CD8-positive, alpha-beta T cell (primary cell): ENCODE measurements at regions of chr17 and their contacts with region 1.

Region 1: DNA sequence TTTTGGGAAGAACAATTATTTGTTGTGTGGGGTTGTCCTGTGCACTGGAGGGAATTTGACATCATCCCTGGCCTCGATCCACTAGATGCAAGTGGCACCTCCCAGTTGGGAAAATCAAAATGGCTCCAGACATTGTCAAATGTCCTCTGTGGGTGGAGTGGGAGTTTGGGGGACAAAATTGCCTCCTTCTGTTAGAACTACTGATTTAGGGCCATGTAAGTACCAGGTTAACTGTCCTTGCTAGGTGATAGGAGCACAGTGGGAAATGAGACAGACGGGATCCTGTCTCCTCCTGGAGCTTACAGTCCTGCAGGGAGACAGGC is 56.8 kb downstream of the ARHGAP23 start:
- DNase-seq: no peak
- ATAC-seq: no peak
- H3K4me3 ChIP-seq: no peak overlapping the region
- H3K4me3 Mint-ChIP-seq: no peak overlapping the region
- H3K27ac ChIP-seq: no peak overlapping the region
- H3K27ac Mint-ChIP-seq: no peak overlapping the region
- H3K4me1 ChIP-seq: no peaks in the 10 kb centered on the region
- H3K4me1 Mint-ChIP-seq: peaks cover 6% of the 10 kb centered on the region
- H3K27me3 ChIP-seq: no peaks in the 10 kb centered on the region
- H3K27me3 Mint-ChIP-seq: peaks cover 7% of the 10 kb centered on the region
- CTCF ChIP-seq: no peak

Region 2: DNA sequence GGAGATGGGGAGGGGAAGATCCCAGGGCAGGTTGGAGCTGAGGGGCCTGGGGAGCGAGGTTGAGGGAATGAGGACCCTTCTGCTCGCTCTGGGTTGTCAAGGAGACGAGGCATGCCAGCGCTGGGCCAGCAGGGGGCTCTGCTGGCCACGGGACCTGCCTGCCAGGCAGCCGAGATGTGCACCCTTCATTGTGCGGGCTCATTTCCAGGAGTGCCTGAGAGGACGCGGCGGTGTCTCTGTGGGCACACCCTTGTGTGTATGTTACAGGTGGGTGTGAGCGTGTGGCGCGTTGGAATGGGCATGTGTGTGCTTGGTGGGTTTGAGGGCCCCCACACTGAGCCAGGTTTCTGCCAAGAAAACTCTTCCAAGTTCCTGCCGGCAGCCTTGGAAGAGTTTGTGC is 41.0 kb before region 1 on chr17:
- CTCF ChIA-PET with region 1: interaction called, 3 read pairs
- POLR2A ChIA-PET with region 1: no interaction called
- intact Hi-C with region 1: loop called (anchors 1 to 2 kb)
- DNase-seq: peak; percentile 11 to 67 (median 54)
- ATAC-seq: peak; percentile 93
- H3K4me3 ChIP-seq: no peak overlapping the region
- H3K4me3 Mint-ChIP-seq: no peak overlapping the region
- H3K27ac ChIP-seq: no peak overlapping the region
- H3K27ac Mint-ChIP-seq: no peak overlapping the region
- H3K4me1 ChIP-seq: peaks cover 7% of the 10 kb centered on the region
- H3K4me1 Mint-ChIP-seq: peaks cover 6% of the 10 kb centered on the region
- H3K27me3 ChIP-seq: no peaks in the 10 kb centered on the region
- H3K27me3 Mint-ChIP-seq: peaks cover 2% of the 10 kb centered on the region
- CTCF ChIP-seq: peak; percentile 67